Activated naive CD8-positive, alpha-beta T cell treated with anti-CD3 and anti-CD28 coated beads, Interleukin-2, amount 10 ng/mL, durations not matched to agents 7 days and 5 days (primary cell): ENCODE measurements at regions of chr2 and their contacts with region 1.

Region 1: GRCh38 chr2:196926562-196927375 is at the start of gene PGAP1:
- DNase-seq: peak; percentile 93
- ATAC-seq: peak; percentile 88
- H3K4me3 Mint-ChIP-seq: peak within 1 kb of the TSS; percentile 97
- H3K27ac Mint-ChIP-seq: peak within 1 kb of the TSS; percentile 94
- H3K4me1 Mint-ChIP-seq: peaks cover 28% of the 10 kb centered on the region
- H3K27me3 Mint-ChIP-seq: no peaks in the 10 kb centered on the region
- total RNA-seq, gene PGAP1: 40.8 to 44.9 TPM

Region 2: DNA sequence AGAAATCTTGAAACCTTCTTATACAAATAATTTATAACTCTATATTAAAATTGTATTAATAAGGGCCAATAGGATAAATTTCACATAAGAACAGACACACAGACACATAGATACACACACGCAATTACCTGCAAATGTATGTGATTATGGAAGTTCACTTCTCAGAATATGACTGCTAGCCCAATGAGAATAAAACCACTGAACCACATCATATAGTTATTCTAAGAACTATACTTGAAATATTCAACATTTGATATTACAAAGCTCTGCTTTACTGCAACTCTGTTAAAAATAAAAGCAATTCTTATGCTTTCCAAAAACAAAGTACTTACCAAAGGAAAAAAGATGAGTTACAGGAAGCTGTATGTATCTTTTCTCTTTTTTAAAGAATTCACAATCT is 51.4 kb before region 1 on chr2:
- POLR2A ChIA-PET with region 1: interaction called, 14 read pairs
- DNase-seq: no peak
- ATAC-seq: peak; percentile 88
- H3K4me3 Mint-ChIP-seq: no peak overlapping the region
- H3K27ac Mint-ChIP-seq: no peak overlapping the region
- H3K4me1 Mint-ChIP-seq: peaks cover 31% of the 10 kb centered on the region
- H3K27me3 Mint-ChIP-seq: no peaks in the 10 kb centered on the region

Region 3: GRCh38 chr2:196914867-196915460 is 11.8 kb before region 1 on chr2:
- POLR2A ChIA-PET with region 1: interaction called, 75 read pairs
- DNase-seq: no peak
- ATAC-seq: peak; percentile 98
- H3K4me3 Mint-ChIP-seq: peak overlapping the region; percentile 76
- H3K27ac Mint-ChIP-seq: peak overlapping the region; percentile 94
- H3K4me1 Mint-ChIP-seq: peaks cover 40% of the 10 kb centered on the region
- H3K27me3 Mint-ChIP-seq: no peaks in the 10 kb centered on the region

Region 4: GRCh38 chr2:197069958-197070357 is 143.2 kb after region 1 on chr2:
- POLR2A ChIA-PET with region 1: no interaction called
- DNase-seq: no peak
- ATAC-seq: no peak
- H3K4me3 Mint-ChIP-seq: no peak overlapping the region
- H3K27ac Mint-ChIP-seq: no peak overlapping the region
- H3K4me1 Mint-ChIP-seq: peaks cover 25% of the 10 kb centered on the region
- H3K27me3 Mint-ChIP-seq: no peaks in the 10 kb centered on the region